Left cardiac atrium (tissue), 4 donors: ENCODE measurements at regions of chr20 and their contacts with region 1.

Region 1: DNA sequence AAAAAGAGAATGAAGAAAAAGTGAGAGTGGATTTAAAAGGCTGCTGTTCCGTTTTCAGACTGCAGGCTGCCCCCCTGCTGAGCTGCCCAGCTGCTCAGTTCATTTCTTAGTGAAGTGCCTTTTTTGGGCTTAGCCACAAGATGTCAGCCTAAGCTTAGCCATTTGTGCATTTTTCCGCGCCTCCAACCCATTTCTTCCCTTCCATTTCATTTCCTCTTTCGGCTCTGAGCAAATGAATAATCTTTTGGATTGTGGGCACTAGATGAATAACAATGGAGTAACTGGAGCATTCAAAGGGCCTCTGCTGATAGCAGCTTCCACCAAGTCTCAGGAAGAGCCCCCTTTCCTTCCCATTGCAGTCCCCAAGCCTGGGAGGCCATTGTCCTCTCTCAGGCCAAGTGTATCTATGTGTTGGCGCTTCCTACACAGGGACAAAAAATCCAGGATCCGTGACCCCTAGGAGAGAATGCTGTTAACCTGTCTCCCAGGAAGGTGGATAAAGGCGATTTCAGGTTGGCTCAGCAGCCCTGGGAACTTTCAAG is 83.5 kb upstream of the SPTLC3 start:
- DNase-seq: peak; percentile 39
- ATAC-seq: peak; percentile 91

Region 2: GRCh38 chr20:11469795-11470435 is 1455.4 kb before region 1 on chr20:
- intact Hi-C with region 1: no loop called
- DNase-seq: no peak
- ATAC-seq: peak; percentile 15 to 59

Region 3: DNA sequence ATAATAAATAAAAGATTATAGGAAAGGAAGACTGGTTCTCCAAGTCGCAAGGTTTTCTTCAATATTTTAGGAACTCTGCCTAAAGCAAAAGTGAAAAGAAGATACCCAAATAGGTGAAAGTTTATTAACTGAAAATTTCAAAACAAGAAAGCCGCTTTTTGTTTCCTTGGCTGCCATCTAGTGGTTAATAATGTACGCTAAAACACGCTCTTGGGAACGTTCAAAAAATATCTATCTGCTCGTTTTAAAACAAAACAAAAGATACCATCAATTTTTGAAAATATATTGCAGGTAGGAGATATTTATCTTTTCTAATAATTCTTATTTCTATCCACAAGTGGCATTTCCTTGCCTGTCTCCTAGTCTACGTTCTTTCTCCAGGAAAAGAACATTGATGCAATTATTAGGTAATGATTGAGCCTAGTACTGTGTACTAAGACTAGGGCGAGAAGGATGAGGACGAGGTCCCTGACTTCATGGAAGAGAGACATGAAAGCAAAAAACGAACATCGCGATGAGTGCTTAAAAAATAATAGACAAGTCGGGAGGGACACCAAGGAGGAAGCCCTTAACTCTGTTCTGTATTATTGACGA is 180.7 kb after region 1 on chr20:
- intact Hi-C with region 1: loop called in 1 of 2 experiments (anchors 5 kb)
- DNase-seq: no peak
- ATAC-seq: peak in 1 of 2 donors; percentile 34